GM12878 (cell line): ENCODE measurements at regions of chr6 and their contacts with region 1.

Region 1: DNA sequence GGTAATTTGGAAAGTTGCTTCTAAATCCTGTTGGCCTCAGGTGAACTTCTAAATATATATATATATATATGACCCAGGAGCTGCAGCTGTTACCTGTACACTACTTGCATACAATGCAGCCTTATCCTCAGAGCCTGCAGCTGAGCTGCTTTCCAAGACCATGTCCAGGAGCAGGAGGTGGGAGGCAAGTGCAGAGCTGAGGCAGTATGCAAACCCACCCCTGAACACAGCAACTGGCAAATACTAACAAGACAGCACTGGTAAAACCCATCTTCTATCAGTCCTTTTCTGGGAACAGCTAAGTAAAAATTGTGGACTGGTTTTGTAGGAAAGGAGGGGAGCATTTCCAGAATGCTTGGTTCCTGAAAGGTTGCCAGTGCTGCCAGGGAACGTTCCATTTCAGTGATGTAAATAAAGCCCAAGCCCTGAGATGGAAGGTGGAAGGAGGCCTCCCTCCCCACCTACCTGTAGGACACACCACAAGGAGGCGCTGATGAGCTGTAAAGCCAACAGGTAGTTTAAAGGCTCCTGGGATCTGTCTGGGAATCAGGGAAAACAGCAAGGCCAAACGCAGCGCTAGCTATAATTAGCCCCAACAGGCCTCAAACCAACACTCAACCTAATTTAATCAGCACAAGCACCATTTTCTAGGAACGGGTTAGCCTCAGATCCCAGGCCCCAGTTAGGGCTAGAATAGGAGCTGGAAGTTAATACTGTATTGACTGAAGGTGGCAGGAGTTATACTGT is 93.8 kb upstream of the MAP7 start:
- DNase-seq: peak; percentile 40
- ATAC-seq: peak; percentile 90
- H3K4me3 ChIP-seq: no peak overlapping the region
- H3K27ac ChIP-seq: no peak overlapping the region
- H3K4me1 ChIP-seq: no peaks in the 10 kb centered on the region
- H3K27me3 ChIP-seq: no peaks in the 10 kb centered on the region
- CTCF ChIP-seq: peak; percentile 85 to 92 (median 87)
- EP300 ChIP-seq: no peak
- POLR2A ChIP-seq: no peak
- RAD21 ChIP-seq: peak; percentile 97

Region 2: DNA sequence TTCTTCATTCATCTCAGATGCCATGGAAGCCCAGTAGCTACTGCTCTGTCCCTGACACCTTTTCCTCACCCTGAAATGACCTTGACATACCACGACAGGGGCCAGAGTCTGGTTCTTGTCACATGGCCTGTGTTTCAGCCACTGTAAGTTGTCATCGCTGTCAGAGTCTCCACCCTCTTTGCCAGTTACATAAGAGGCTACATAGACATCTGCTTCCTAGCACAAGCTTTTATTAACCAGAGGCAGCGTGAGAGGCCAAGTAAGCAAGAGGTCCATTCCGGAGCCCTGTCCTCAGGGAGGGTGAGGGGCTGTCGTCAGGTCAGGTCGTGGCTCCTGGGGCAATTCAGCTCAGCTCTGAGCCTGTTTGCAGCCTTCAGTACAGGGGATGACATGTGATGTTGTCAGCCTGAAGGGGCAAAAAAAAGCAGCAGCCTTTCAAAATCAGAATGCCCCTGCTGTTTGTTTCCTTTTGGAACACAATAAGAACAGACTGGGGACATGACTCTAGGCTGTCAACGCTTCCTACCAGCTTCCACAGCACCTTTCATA is 540.2 kb before region 1 on chr6:
- CTCF ChIA-PET with region 1: no interaction called
- POLR2A ChIA-PET with region 1: no interaction called
- RAD21 ChIA-PET with region 1: no interaction called
- SMC1A ChIA-PET with region 1: no interaction called
- in situ Hi-C with region 1: no loop called
- intact Hi-C with region 1: no loop called
- DNase-seq: no peak
- ATAC-seq: no peak
- H3K4me3 ChIP-seq: no peak overlapping the region
- H3K27ac ChIP-seq: no peak overlapping the region
- H3K4me1 ChIP-seq: no peaks in the 10 kb centered on the region
- H3K27me3 ChIP-seq: 0 out of 4 replicates have a peak, but pooled peaks cover 0 to 3% of the 10 kb centered on the region in 2 experiments
- CTCF ChIP-seq: no peak
- EP300 ChIP-seq: no peak
- POLR2A ChIP-seq: no peak
- RAD21 ChIP-seq: no peak

Region 3: DNA sequence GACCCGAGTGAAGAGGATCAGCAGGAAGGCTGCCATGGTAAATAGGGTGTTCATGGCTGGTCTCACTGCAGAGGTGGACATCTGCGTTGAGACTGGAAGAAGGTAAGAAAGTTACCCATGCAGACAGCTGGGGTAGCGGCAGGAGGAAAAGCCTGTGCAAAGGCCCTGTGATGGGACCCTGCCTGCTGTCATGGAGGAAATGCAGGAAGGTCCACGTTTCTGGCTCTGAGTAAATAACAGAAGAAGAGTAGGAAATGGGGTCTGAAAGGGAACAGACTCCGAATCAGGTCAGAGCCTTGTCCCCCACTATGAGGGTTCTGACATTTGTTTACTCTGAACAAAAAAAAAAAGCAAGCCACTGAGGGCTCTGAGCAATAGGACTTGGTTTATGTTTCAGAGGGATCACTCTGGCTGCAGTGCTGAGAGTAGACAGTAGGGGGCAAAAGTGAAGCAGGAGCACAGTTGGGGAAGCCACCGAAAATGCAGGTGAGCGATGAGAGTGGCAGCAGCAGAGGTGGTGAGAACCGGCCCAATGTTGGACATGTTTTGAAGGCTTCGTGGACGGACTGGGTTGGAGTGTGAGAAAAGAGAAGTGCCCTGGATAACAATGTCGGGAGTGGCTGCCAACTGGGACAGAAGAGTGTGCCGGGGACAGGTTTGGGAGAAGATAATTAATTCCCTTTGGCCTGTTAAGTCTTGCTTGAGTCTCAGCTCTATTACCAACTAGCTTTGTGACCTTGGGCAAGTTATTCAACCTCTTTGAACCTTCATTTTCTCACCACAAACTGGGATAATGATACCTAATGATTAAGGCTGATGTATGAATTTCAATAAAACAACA is 35.9 kb before region 1 on chr6:
- CTCF ChIA-PET with region 1: interaction called, 38 read pairs
- POLR2A ChIA-PET with region 1: no interaction called
- RAD21 ChIA-PET with region 1: interaction called, 4 read pairs
- SMC1A ChIA-PET with region 1: interaction called, 14 read pairs
- in situ Hi-C with region 1: no loop called
- intact Hi-C with region 1: no loop called
- DNase-seq: peak; percentile 17
- ATAC-seq: peak; percentile 96
- H3K4me3 ChIP-seq: no peak overlapping the region
- H3K27ac ChIP-seq: no peak overlapping the region
- H3K4me1 ChIP-seq: no peaks in the 10 kb centered on the region
- H3K27me3 ChIP-seq: no peaks in the 10 kb centered on the region
- CTCF ChIP-seq: peak; percentile 68 to 90 (median 90)
- EP300 ChIP-seq: no peak
- POLR2A ChIP-seq: no peak
- RAD21 ChIP-seq: peak; percentile 72

Region 4: GRCh38 chr6:136669299-136669699 is 25.3 kb after region 1 on chr6:
- CTCF ChIA-PET with region 1: interaction called, 29 read pairs
- POLR2A ChIA-PET with region 1: no interaction called
- RAD21 ChIA-PET with region 1: interaction called, 5 read pairs
- SMC1A ChIA-PET with region 1: interaction called, 19 read pairs
- in situ Hi-C with region 1: no loop called
- intact Hi-C with region 1: no loop called
- DNase-seq: no peak
- ATAC-seq: no peak
- H3K4me3 ChIP-seq: no peak overlapping the region
- H3K27ac ChIP-seq: no peak overlapping the region
- H3K4me1 ChIP-seq: no peaks in the 10 kb centered on the region
- H3K27me3 ChIP-seq: no peaks in the 10 kb centered on the region
- CTCF ChIP-seq: no peak
- EP300 ChIP-seq: no peak
- POLR2A ChIP-seq: no peak
- RAD21 ChIP-seq: no peak

Region 5: DNA sequence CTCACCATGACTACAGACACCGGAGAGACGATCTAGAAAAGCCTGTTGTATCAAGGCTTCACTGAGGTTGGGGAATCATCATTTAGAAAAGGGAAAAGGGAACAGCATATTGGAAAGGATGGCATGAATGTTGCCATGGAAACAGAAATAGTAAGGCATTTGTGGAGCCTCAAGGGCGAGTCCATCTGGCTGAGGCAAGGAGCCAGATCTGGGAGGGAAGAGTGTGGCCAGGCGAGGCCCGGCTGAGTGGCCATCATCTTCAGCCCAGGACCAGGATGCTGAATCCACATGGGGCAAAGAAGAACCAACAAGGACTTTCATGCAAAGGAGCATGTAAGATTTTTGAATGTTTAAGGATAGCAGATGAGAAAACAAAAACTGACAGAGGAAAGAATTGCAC is 62.4 kb after region 1 on chr6:
- CTCF ChIA-PET with region 1: interaction called, 13 read pairs
- POLR2A ChIA-PET with region 1: no interaction called
- RAD21 ChIA-PET with region 1: interaction called, 10 read pairs
- SMC1A ChIA-PET with region 1: interaction called, 35 read pairs
- in situ Hi-C with region 1: no loop called
- intact Hi-C with region 1: no loop called
- DNase-seq: no peak
- ATAC-seq: no peak
- H3K4me3 ChIP-seq: no peak overlapping the region
- H3K27ac ChIP-seq: no peak overlapping the region
- H3K4me1 ChIP-seq: no peaks in the 10 kb centered on the region
- H3K27me3 ChIP-seq: no peaks in the 10 kb centered on the region
- CTCF ChIP-seq: no peak
- EP300 ChIP-seq: no peak
- POLR2A ChIP-seq: no peak
- RAD21 ChIP-seq: no peak

Region 6: DNA sequence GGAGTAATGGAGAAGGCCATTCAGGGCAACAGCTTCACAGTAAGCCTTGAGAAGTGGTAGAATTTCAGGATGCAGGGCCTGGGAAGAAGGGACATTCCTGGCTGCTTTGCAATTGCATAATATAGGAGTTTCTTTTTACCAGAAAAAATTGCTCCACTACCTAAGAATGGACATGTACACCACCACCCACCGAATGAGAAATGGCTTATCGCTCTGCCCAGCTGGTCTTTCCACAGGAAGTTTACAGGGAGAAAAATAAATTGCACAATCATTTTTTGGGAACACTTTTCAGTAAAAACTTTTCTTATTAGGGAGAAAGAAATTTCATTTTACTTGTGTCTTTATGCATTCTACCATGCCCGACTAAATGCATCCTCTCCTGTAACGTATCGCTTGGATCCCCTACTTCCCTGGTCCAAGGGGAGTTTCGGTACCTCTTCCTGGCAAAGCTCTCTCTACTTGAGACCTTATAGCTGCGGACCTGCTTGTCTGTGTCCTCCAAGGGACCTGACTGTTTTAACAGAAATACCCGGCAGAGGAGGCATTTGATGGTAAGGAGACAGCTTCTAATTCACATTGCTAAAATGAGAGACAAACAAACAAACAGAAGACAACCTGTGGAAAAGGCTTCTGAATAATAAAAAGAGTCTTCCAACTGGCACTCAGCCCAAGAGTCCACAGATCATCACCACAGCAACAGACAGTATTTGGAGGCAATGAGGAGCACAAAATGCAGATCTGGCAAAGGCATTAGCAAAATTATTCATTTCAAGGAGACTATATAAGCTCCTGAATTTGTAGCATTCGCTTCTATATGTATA is 94.1 kb after region 1 on chr6:
- CTCF ChIA-PET with region 1: interaction called, 34 read pairs
- POLR2A ChIA-PET with region 1: interaction called, 3 read pairs
- RAD21 ChIA-PET with region 1: interaction called, 5 read pairs
- SMC1A ChIA-PET with region 1: interaction called, 32 read pairs
- in situ Hi-C with region 1: no loop called
- intact Hi-C with region 1: no loop called
- DNase-seq: no peak
- ATAC-seq: no peak
- H3K4me3 ChIP-seq: no peak overlapping the region
- H3K27ac ChIP-seq: no peak overlapping the region
- H3K4me1 ChIP-seq: peaks cover 7% of the 10 kb centered on the region; the same call in 1 of the 2 replicates
- H3K27me3 ChIP-seq: no peaks in the 10 kb centered on the region
- CTCF ChIP-seq: no peak
- EP300 ChIP-seq: no peak
- POLR2A ChIP-seq: no peak
- RAD21 ChIP-seq: no peak

Region 7: DNA sequence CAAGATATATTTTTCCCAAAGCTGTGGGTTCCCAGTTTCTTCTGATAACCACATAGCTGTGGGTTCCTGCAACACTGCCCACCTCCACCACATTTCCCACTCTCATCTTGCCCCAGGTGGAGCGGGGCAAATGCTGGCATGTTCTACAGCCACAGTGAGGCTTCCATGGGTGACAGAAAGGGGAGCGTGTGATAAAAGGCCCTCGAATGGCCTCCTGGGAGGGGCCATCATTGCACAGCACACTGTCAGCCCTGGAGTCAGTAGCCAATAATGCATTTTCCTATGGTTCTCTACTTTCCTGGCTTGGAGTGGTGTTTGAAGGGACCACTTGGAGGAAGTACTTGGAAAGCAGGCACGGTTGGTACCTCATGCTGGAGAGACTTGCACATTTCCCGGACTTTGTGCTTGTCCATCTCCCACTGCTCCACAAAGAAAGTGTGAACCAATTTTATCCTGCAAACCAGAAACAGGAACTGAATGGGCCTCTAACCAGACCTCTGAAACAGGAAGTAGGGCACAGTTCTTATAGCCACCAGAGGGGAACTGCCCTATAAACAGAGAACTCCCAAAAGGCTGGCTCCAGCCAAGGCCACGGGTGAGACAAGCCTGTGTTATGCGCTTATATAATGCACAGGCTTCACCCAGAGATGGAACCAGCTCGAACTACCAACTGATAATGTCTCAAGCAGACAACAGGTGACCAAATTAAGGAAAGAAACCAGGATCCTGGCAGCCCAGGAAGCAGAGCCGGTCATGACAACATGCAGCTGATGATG is 139.7 kb after region 1 on chr6:
- CTCF ChIA-PET with region 1: interaction called, 411 read pairs
- POLR2A ChIA-PET with region 1: interaction called, 59 read pairs
- RAD21 ChIA-PET with region 1: interaction called, 296 read pairs
- SMC1A ChIA-PET with region 1: interaction called, 275 read pairs
- in situ Hi-C with region 1: no loop called
- intact Hi-C with region 1: no loop called
- DNase-seq: no peak
- ATAC-seq: peak; percentile 75
- H3K4me3 ChIP-seq: peak overlapping the region; percentile 76
- H3K27ac ChIP-seq: peak overlapping the region; percentile 92
- H3K4me1 ChIP-seq: peaks cover 27% of the 10 kb centered on the region
- H3K27me3 ChIP-seq: no peaks in the 10 kb centered on the region
- CTCF ChIP-seq: peak in 2 of 3 experiments; percentile 18 to 34; a peak in 1 of 6 replicates
- EP300 ChIP-seq: peak in 1 of 2 experiments; percentile 59; a peak in 1 of 4 replicates
- POLR2A ChIP-seq: peak; percentile 33; the same call in 1 of the 2 replicates
- RAD21 ChIP-seq: no peak

Region 8: DNA sequence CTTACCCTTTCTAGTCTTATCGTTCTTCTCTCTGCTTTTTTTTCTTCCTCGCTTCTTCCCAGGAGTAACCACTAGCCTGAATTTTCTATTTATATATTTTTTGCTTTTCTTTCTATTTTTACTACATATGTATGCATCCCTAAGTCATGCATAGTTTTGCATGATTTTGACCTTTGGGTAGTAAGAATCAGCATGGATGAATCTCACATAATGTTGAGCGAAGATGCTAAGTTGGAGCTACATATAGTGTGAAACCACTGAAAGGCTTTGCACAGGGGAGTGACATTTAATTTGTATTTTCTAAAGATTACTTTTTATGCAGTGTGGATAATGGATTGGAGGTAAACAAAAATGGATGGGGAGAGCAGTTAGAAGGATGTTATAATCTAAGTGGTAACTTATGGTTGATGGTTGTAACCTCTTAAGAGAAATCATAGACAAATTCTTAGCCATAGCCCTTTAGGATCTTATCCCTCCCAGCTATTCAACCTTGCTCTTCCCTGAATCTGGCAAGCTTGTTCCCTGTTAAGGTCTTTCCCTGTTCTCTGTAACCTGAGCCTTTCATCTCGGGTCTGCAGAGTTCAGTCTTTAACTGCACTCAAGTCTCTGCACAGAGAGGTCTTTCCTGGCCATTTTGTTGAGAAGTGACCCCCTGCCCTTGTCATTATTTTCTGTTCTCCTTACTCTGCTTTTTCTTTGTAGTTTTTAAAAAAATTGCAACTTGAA is 196.4 kb after region 1 on chr6:
- CTCF ChIA-PET with region 1: interaction called, 17 read pairs
- POLR2A ChIA-PET with region 1: no interaction called
- RAD21 ChIA-PET with region 1: interaction called, 3 read pairs
- SMC1A ChIA-PET with region 1: interaction called, 13 read pairs
- in situ Hi-C with region 1: no loop called
- intact Hi-C with region 1: no loop called
- DNase-seq: no peak
- ATAC-seq: no peak
- H3K4me3 ChIP-seq: no peak overlapping the region
- H3K27ac ChIP-seq: no peak overlapping the region
- H3K4me1 ChIP-seq: no peaks in the 10 kb centered on the region
- H3K27me3 ChIP-seq: no peaks in the 10 kb centered on the region
- CTCF ChIP-seq: no peak
- EP300 ChIP-seq: no peak
- POLR2A ChIP-seq: no peak
- RAD21 ChIP-seq: no peak

Region 9: GRCh38 chr6:137297887-137298286 is 653.9 kb after region 1 on chr6:
- CTCF ChIA-PET with region 1: no interaction called
- POLR2A ChIA-PET with region 1: no interaction called
- RAD21 ChIA-PET with region 1: no interaction called
- SMC1A ChIA-PET with region 1: no interaction called
- in situ Hi-C with region 1: no loop called
- intact Hi-C with region 1: no loop called
- DNase-seq: no peak
- ATAC-seq: no peak
- H3K4me3 ChIP-seq: no peak overlapping the region
- H3K27ac ChIP-seq: no peak overlapping the region
- H3K4me1 ChIP-seq: no peaks in the 10 kb centered on the region
- H3K27me3 ChIP-seq: no peaks in the 10 kb centered on the region
- CTCF ChIP-seq: no peak
- EP300 ChIP-seq: no peak
- POLR2A ChIP-seq: no peak
- RAD21 ChIP-seq: no peak